ENCODE measurements at regions of chr11 and their contacts with region 1.

Region 1: GRCh38 chr11:102109896-102110760 is at the start of gene YAP1:
- DNase-seq: peak; percentile 81
- ATAC-seq: peak; percentile 76
- H3K4me3 Mint-ChIP-seq: peak within 1 kb of the TSS; percentile 89
- H3K27ac Mint-ChIP-seq: no peak within 1 kb of the TSS
- H3K4me1 Mint-ChIP-seq: peaks cover 13% of the 10 kb centered on the region
- H3K27me3 Mint-ChIP-seq: peaks cover 43% of the 10 kb centered on the region
- total RNA-seq, gene YAP1: 0.21 to 0.25 TPM

Region 2: DNA sequence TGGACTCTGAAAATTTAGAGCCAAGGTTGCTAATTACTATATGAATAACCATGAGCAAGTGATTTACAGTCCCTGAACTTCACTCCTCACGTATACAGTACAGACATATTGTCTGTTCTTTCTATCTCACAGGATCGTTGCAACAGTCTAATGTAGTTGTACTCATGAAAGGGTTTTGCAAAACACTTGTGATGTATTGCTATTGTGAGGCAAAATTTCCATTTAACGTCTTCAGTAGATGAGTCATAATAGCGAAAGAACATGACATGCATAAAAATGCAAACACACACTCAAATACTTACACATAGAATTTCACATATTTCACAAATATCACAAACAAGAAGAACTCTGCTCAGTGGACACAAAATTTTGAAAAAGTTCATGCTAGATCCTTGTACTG is 391.7 kb before region 1 on chr11:
- CTCF ChIA-PET with region 1: no interaction called
- POLR2A ChIA-PET with region 1: no interaction called
- intact Hi-C with region 1: no loop called
- DNase-seq: no peak
- ATAC-seq: no peak
- H3K4me3 Mint-ChIP-seq: no peak overlapping the region
- H3K27ac Mint-ChIP-seq: no peak overlapping the region
- H3K4me1 Mint-ChIP-seq: no peaks in the 10 kb centered on the region
- H3K27me3 Mint-ChIP-seq: no peaks in the 10 kb centered on the region

Region 3: DNA sequence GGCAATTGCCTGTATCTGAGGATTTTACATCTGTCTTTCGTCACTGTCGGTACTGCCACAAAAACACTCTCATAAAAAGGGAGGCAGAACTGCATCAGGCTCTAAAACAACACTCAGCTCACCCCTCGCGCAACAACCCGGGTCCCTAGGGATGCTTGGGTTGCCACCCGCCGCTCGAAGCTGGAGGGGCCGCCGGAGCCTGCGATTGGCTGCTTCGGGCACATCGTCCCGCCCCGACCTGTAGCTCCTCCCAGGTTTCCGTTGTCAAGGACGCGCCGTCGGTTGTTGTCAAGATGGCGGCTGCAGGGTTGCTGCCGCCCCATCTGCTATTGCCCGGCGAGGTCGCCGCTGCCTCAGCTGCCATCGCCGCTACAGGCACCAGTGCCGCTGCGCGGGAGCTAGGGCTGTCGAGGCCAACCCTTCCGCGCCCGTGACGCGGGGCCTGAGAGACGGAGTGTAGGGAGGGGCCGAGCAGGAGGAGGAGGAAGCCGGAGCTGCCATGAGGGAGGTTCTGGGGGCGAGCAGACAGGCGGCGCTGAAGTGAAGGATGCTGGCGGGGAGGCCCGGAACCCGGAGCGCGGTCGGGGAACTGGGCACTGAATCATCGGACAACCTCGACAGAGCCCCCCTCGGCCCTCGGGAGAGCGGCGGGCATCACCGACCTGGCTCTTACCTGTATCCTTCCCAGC is 195.2 kb before region 1 on chr11 and contains the start of gene CEP126:
- CTCF ChIA-PET with region 1: no interaction called
- POLR2A ChIA-PET with region 1: no interaction called
- intact Hi-C with region 1: loop called in 1 of 2 experiments (anchors 2 kb)
- DNase-seq: peak; percentile 96
- ATAC-seq: peak; percentile 96
- H3K4me3 Mint-ChIP-seq: peak within 1 kb of the TSS; percentile 86
- H3K27ac Mint-ChIP-seq: peak within 1 kb of the TSS; percentile 86
- H3K4me1 Mint-ChIP-seq: peaks cover 16% of the 10 kb centered on the region
- H3K27me3 Mint-ChIP-seq: peaks cover 2% of the 10 kb centered on the region
- total RNA-seq, gene CEP126: 1.3 to 2.0 TPM

Region 4: DNA sequence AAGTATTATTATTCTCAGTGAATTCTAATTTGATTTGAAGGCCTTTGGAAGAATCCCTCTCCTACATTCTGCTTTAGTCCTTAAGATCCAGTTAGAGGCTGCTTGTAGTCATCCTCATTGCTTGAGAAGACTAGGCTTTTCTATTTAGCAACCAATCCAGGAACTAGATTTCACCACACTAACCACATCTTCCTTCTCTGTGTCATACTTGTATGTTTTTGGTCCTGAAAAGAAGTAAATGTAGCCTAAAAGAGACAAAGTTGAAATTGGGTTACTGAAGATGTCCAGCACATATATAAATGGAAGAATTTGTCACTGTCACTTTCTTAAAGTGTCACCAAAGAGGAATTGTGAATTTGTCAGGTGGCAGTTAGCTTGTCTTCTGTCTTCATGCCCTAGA is 467.1 kb after region 1 on chr11:
- CTCF ChIA-PET with region 1: no interaction called
- POLR2A ChIA-PET with region 1: no interaction called
- intact Hi-C with region 1: no loop called
- DNase-seq: no peak
- ATAC-seq: peak; percentile 65
- H3K4me3 Mint-ChIP-seq: no peak overlapping the region
- H3K27ac Mint-ChIP-seq: no peak overlapping the region
- H3K4me1 Mint-ChIP-seq: peaks cover 28% of the 10 kb centered on the region
- H3K27me3 Mint-ChIP-seq: no peaks in the 10 kb centered on the region